CD14-positive monocyte (primary cell): ENCODE measurements at regions of chr14 and their contacts with region 1.

Region 1: DNA sequence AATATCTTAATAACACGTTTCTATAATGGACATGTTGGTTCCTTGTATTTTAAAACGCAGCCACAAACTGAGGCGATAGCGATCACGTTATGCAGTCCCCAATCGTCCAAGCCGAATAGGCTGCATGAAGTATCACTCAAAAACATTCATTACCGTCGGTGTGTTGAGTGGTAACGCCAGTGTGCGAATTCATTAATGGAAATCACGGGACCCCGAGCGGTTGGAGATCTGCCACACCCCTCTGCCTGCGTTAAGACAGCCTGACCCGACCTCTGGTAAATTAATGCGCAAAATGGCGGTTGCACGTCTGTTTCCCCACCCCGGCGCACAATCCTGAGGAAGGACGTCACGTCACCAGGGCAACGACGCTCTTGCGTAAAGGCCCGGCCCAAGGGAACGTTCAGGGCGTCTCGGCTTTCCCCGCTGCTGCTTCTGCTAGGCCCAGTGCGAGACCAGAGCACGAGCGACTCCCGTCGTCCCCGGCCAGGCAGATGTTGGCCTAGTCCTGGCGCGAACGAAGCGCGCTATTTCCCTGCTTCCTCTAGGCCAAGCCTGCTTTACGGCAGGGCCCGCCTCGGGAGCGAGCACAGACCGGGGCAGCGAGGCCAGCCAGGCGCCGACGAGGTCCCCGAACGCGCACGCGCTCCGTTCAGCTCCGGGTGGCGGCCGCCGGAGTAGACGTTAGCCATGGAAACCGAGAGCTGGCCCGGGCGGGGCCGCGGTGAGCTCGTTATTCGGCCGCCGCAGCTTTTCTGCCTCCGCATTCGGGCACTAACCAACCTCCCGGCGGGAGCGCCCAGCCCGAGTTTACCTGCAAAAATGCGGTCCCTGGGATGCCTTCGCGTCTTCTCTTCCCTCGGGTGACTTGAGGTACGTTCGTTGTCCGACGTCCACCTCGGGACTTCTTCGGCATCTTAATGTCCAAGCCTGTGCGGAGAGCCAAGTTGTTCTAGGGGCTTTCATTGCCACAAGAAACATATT is at the start of gene PCNX4:
- DNase-seq: peak; percentile 98 to 99 (median 98)
- H3K4me3 ChIP-seq: peak within 1 kb of the TSS; percentile 70 to 87 (median 85)
- H3K4me3 Mint-ChIP-seq: peak within 1 kb of the TSS; percentile 93 to 96
- H3K27ac ChIP-seq: peak within 1 kb of the TSS; percentile 97 to 99
- H3K27ac Mint-ChIP-seq: peak within 1 kb of the TSS; percentile 95 to 100 (median 98)
- H3K4me1 ChIP-seq: peaks cover 20 to 35% of the 10 kb centered on the region in 2 donors
- H3K4me1 Mint-ChIP-seq: peaks cover 40% of the 10 kb centered on the region
- H3K27me3 ChIP-seq: no peaks in the 10 kb centered on the region
- H3K27me3 Mint-ChIP-seq: no peaks in the 10 kb centered on the region
- CTCF ChIP-seq: no peak
- polyA plus RNA-seq, gene PCNX4: 13.1 to 18.4 (median 16.7) TPM

Region 2: GRCh38 chr14:60025571-60025970 is 66.3 kb before region 1 on chr14:
- intact Hi-C with region 1: no loop called
- DNase-seq: no peak
- H3K4me3 ChIP-seq: no peak overlapping the region
- H3K4me3 Mint-ChIP-seq: no peak overlapping the region
- H3K27ac ChIP-seq: no peak overlapping the region
- H3K27ac Mint-ChIP-seq: no peak overlapping the region
- H3K4me1 ChIP-seq: no peaks in the 10 kb centered on the region
- H3K4me1 Mint-ChIP-seq: no peaks in the 10 kb centered on the region
- H3K27me3 ChIP-seq: no peaks in the 10 kb centered on the region
- H3K27me3 Mint-ChIP-seq: peaks cover 0 to 2% (median 0%) of the 10 kb centered on the region in 3 donors
- CTCF ChIP-seq: no peak

Region 3: DNA sequence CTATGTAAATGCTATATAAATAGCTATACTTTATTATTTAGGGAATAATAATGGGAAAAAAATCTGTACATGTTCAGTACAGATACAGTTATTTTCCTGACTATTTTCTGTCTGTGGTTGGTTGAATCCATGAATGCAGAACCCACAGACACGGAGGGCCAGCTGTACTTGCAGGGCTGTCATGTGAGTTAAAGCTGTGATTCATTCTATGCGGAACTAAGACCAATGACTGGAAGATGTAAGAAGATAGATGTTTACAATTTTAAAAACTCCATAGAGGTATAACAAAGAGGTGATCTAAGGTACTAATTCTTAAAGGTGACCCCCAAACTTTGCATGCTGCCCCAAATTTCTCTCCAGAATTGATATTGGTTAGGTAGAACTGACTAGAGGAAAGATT is 14.5 kb after region 1 on chr14:
- intact Hi-C with region 1: loop called in 1 of 2 experiments (anchors 2 kb)
- DNase-seq: peak; percentile 72 to 86 (median 81)
- H3K4me3 ChIP-seq: no peak overlapping the region
- H3K4me3 Mint-ChIP-seq: no peak overlapping the region
- H3K27ac ChIP-seq: peak overlapping the region in 1 of 2 donors; percentile 72
- H3K27ac Mint-ChIP-seq: peak overlapping the region; percentile 11 to 87 (median 68)
- H3K4me1 ChIP-seq: peaks cover 10 to 14% of the 10 kb centered on the region in 2 donors
- H3K4me1 Mint-ChIP-seq: peaks cover 24% of the 10 kb centered on the region
- H3K27me3 ChIP-seq: no peaks in the 10 kb centered on the region
- H3K27me3 Mint-ChIP-seq: no peaks in the 10 kb centered on the region
- CTCF ChIP-seq: no peak

Region 4: DNA sequence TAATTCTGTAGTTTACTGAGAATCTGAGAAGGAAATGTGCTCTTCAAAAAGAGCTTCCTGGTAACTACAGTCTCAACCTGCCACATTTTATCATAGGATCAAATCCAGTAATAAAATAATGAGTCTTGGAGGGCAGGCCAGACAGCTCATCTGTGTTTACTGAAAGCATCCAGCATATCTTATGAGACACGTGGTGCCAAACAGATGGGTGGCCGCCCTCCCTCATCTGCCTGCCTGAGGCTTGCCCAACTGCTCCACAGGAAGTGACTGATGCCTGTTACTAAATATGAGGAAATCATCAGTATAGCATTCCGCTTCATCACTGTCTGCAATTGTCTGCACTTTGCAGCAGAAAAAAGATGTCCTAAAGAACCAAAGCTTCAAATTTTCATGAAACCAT is 59.9 kb after region 1 on chr14:
- intact Hi-C with region 1: no loop called
- DNase-seq: peak; percentile 92 to 96 (median 95)
- H3K4me3 ChIP-seq: no peak overlapping the region
- H3K4me3 Mint-ChIP-seq: no peak overlapping the region
- H3K27ac ChIP-seq: peak overlapping the region; percentile 25 to 96
- H3K27ac Mint-ChIP-seq: peak overlapping the region; percentile 93 to 99 (median 94)
- H3K4me1 ChIP-seq: peaks cover 44 to 58% of the 10 kb centered on the region in 2 donors
- H3K4me1 Mint-ChIP-seq: peaks cover 45% of the 10 kb centered on the region
- H3K27me3 ChIP-seq: no peaks in the 10 kb centered on the region
- H3K27me3 Mint-ChIP-seq: no peaks in the 10 kb centered on the region
- CTCF ChIP-seq: no peak

Region 5: DNA sequence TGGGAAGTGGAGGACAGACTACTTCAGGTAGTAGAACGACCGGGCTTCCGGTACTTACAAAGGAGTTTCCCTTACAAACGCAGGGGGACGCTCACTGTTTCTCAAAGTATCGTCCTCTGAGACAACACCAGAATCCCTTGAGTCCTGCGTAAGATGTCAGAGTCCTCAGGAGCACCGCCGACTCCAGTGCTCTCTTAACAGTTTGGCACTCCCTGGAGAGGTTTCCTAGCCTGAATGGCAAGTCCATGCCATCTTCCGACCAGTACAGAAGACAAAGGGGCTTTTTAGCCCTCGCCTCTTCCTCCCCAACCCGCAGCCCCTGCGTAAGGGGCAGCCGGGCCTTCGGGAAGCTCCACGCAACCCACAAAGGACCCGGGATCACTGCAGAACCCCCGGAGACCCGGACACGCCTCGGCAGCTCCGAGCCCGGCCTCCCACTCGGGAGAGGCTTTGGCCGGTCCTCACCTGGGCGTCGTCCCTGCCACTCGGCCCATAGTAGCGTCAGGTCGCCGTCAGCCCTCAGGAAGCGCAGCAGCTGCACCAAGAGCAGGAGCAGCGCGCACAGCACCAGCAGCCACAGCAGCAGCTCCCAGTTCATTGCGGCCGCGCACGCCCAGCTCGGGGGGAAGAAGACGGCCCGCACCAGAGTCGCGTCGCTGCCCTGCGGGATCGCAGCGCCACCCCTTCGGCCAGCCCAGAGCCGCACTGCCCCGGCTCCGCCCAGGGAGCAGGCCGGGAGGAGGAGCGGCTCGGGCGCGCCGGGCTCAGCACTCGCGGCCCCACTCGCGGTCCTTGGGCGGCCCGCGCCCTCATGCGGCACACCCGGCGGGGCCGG is 73.1 kb after region 1 on chr14 and contains the start of gene DHRS7:
- intact Hi-C with region 1: loop called (anchors 5 kb)
- DNase-seq: peak; percentile 80 to 82 (median 81)
- H3K4me3 ChIP-seq: peak within 1 kb of the TSS; percentile 69 to 96 (median 92)
- H3K4me3 Mint-ChIP-seq: peak within 1 kb of the TSS; percentile 97
- H3K27ac ChIP-seq: peak within 1 kb of the TSS; percentile 84 to 98
- H3K27ac Mint-ChIP-seq: peak within 1 kb of the TSS; percentile 95 to 99 (median 96)
- H3K4me1 ChIP-seq: peaks cover 34 to 41% of the 10 kb centered on the region in 2 donors
- H3K4me1 Mint-ChIP-seq: peaks cover 43% of the 10 kb centered on the region
- H3K27me3 ChIP-seq: no peaks in the 10 kb centered on the region
- H3K27me3 Mint-ChIP-seq: peaks cover 0 to 4% (median 0%) of the 10 kb centered on the region in 3 donors
- CTCF ChIP-seq: peak; percentile 34
- polyA plus RNA-seq, gene DHRS7: 55.4 to 223 (median 218) TPM

Region 6: DNA sequence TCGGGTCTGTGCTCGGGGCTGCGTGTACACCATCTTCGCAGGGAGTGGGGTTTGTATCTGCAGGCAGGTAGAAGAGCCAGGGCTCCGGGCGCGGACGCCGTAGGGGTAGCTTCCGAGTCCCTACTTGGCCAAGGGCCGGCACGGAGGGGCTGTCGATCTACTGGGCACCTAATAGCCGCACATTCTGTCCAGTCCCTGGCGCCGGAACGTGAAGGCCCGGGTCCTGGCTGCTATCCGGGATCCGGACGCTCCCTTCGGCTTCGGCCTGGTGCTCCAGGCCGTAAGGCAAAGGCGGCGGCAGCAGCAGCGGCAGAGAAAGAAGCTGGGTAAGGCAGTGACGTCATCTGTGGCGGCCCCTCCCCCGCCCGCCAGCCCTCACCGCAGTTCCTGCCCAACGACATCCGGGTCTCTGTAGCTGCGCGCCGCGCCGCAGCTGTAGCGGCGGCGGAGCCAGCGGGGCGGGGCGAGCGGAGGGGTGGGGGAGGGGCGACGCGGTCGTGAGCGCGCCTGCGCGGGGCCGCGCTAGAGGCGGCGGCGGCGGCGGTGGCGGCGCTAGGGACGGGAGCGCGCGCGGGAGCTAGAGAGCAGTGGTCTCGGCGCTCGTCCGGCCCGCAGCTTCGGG is 157.0 kb after region 1 on chr14 and contains the start of gene PPM1A:
- intact Hi-C with region 1: loop called (anchors 10 kb)
- DNase-seq: peak; percentile 96 to 97 (median 96)
- H3K4me3 ChIP-seq: peak within 1 kb of the TSS; percentile 92 to 98 (median 93)
- H3K4me3 Mint-ChIP-seq: peak within 1 kb of the TSS; percentile 87 to 95
- H3K27ac ChIP-seq: peak within 1 kb of the TSS; percentile 98 to 99
- H3K27ac Mint-ChIP-seq: peak within 1 kb of the TSS; percentile 97 to 100 (median 99)
- H3K4me1 ChIP-seq: peaks cover 35 to 41% of the 10 kb centered on the region in 2 donors
- H3K4me1 Mint-ChIP-seq: peaks cover 51% of the 10 kb centered on the region
- H3K27me3 ChIP-seq: no peaks in the 10 kb centered on the region
- H3K27me3 Mint-ChIP-seq: peaks cover 0 to 3% (median 1%) of the 10 kb centered on the region in 3 donors
- CTCF ChIP-seq: no peak
- polyA plus RNA-seq, gene PPM1A: 18.4 to 34.1 (median 21.5) TPM

Region 7: DNA sequence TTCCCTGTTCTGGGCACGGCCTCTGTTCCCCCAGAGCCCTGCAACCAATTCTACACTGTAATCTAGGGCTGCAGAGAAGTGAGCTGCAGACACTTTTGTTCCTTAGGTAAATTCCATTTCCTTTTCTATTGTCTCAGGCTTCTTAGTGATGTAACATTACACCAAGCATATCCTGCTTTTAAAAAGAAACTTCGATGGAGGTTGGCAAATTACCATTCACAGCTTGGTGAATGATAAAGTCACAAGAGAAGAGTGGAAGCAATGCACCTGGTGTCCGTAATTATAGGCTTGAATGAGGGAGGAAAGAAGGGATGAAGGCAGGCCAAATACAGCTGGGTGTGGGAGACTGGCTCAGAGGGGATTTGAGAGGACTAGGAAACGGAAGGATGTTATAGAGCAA is 225.8 kb after region 1 on chr14:
- intact Hi-C with region 1: no loop called
- DNase-seq: no peak
- H3K4me3 ChIP-seq: no peak overlapping the region
- H3K4me3 Mint-ChIP-seq: no peak overlapping the region
- H3K27ac ChIP-seq: no peak overlapping the region
- H3K27ac Mint-ChIP-seq: no peak overlapping the region
- H3K4me1 ChIP-seq: no peaks in the 10 kb centered on the region
- H3K4me1 Mint-ChIP-seq: peaks cover 4% of the 10 kb centered on the region
- H3K27me3 ChIP-seq: peaks cover 3 to 6% of the 10 kb centered on the region in 2 donors
- H3K27me3 Mint-ChIP-seq: peaks cover 0 to 10% (median 2%) of the 10 kb centered on the region in 3 donors
- CTCF ChIP-seq: no peak

Region 8: GRCh38 chr14:61103481-61104339 is 1011.9 kb after region 1 on chr14:
- intact Hi-C with region 1: loop called in 1 of 2 experiments (anchors 5 kb)
- DNase-seq: peak; percentile 89 to 97 (median 93)
- H3K4me3 ChIP-seq: peak overlapping the region in 2 of 3 experiments; percentile 9 to 49
- H3K4me3 Mint-ChIP-seq: peak overlapping the region; percentile 55 to 82
- H3K27ac ChIP-seq: peak overlapping the region; percentile 89 to 98
- H3K27ac Mint-ChIP-seq: peak overlapping the region; percentile 98 to 100 (median 99)
- H3K4me1 ChIP-seq: peaks cover 57 to 59% of the 10 kb centered on the region in 2 donors
- H3K4me1 Mint-ChIP-seq: peaks cover 58% of the 10 kb centered on the region
- H3K27me3 ChIP-seq: no peaks in the 10 kb centered on the region
- H3K27me3 Mint-ChIP-seq: no peaks in the 10 kb centered on the region
- CTCF ChIP-seq: no peak